ENCODE measurements at regions of chr21 and their contacts with region 1.

Region 1: GRCh38 chr21:25901330-25901979 is 166.7 kb downstream of the GABPA start:
- DNase-seq: no peak
- H3K4me3 ChIP-seq: no peak overlapping the region
- CTCF ChIP-seq: no peak

Region 2: GRCh38 chr21:25647647-25648046 is 253.8 kb before region 1 on chr21:
- CTCF ChIA-PET with region 1: no interaction called
- POLR2A ChIA-PET with region 1: no interaction called
- DNase-seq: no peak
- H3K4me3 ChIP-seq: no peak overlapping the region
- CTCF ChIP-seq: no peak

Region 3: DNA sequence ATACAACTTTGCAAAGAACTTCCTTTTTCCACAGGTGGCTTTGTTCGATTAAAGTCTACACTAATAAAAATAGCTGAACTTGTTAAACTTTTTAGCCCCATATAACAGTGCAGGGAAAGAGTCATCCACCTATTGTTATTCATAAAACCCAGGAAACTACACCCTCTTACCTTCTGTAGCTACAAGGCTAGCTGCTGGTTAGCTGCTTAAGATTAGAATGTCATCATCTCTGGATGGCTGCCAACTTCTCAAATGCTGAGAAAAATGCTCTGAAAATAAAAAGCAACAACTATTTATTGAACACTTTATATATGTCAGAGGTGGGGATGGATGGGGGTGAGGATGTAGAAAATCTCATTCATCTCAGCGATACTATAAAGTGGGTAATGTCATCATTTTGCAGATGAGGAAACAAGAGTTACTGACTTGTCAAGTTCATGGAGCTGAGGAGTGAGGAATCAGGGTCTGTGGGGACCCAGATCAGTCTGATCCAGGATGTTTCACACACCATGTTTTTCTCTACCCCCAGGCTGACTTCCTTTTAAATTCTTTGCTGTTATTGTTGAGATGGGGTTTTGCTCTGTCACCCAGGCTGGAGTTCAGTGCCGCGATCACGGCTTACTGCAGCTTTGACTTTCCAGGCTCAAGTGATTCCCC is 183.8 kb before region 1 on chr21:
- CTCF ChIA-PET with region 1: no interaction called
- POLR2A ChIA-PET with region 1: no interaction called
- DNase-seq: no peak
- H3K4me3 ChIP-seq: no peak overlapping the region
- CTCF ChIP-seq: no peak

Region 4: DNA sequence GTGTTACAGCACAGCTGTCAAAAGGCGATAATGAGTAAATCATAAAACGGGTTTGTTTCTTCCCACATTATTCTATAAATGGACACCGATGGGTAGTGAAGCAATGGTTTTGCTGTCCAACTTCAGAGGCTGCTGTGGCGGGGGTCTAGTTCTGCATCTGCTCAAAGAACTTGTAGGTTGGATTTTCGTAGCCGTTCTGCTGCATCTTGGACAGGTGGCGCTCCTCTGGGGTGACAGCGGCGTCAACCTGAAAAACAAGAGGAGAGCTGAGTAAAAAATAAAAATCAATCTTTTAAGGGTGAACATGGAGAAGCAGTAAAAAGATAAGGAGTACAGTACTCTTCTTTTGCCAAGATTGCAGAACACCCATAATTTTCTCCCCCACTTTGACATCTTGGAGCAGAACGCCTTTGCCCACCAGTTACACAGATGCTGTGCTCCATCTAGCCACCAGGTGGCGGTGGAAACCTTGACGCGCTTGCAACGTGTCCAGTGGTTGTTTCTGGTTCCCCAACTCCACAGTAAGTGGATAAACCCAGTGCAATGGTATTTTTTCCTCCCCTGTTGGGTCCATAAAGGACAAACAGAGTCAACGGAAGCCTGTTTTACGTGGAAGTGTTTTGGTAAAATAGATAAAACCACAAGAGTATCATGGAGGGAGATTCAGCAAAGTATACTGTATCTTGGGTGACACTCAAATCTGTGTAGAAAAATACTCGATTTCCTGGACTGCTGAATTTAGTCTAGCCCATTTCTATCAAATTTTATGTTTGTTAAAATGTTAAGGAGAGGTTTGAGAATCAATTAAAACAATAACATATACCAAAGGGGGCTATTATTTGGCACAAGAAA is 19.7 kb before region 1 on chr21:
- CTCF ChIA-PET with region 1: interaction called, 18 read pairs
- POLR2A ChIA-PET with region 1: no interaction called
- DNase-seq: no peak
- H3K4me3 ChIP-seq: no peak overlapping the region
- CTCF ChIP-seq: peak; percentile 90